ENCODE measurements at regions of chr21 and their contacts with region 1.

Region 1: DNA sequence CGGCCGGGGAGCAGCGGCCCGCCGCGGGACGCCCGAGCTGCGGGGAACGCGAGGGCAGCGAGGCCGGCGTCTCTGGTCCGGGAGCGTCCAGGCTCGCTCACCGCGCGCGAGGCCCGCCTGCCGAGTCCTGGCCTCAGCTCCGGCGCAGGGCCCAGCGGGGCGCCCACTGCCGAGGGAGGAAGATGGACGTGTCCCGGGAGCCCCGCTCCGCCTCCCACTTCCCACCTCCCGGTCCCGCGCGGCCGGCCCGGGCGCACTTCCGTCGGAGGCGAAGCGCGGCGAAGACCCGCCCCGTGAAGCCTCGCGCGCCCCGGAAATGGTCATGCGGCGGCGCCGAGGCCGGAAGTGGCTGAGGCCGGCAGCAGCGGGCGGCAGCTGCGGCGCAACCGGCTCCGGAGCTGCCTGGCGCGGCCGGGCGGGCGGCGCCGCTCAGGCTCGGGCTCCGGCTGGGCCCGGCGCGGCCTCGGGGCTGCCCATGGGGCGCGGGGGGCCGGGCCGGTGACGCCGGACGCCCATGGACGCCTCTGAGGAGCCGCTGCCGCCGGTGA is at the start of gene TRAPPC10:
- H3K4me3 Mint-ChIP-seq: peak within 1 kb of the TSS; percentile 84
- H3K27ac Mint-ChIP-seq: peak within 1 kb of the TSS; percentile 86
- H3K4me1 Mint-ChIP-seq: peaks cover 51% of the 10 kb centered on the region
- H3K27me3 Mint-ChIP-seq: no peaks in the 10 kb centered on the region

Region 2: GRCh38 chr21:44454747-44455523 is 442.9 kb after region 1 on chr21 and contains the start of gene LRRC3:
- intact Hi-C with region 1: loop called (anchors 5 kb)
- H3K4me3 Mint-ChIP-seq: peak within 1 kb of the TSS; percentile 81
- H3K27ac Mint-ChIP-seq: peak within 1 kb of the TSS; percentile 58
- H3K4me1 Mint-ChIP-seq: peaks cover 31% of the 10 kb centered on the region
- H3K27me3 Mint-ChIP-seq: peaks cover 45% of the 10 kb centered on the region

Measured in dendritic cell treated with granulocyte-macrophage colony-stimulating factor and Interleukin-4, amounts not matched to agents 40 ng/mL and 50 ng/mL, for 4 days (primary cell).